Activated T-helper 1 cell treated with anti-CD3 and anti-CD28 coated beads, Interleukin-12 subunit alpha, Interleukin-12 subunit beta, Interleukin-2, Interleukin-4 antibody, amounts not matched to agents 30 ng/mL and 10 ng/mL and 1 ng/mL, durations not matched to agents 14 hours and 24 hours and 36 hours (primary cell): ENCODE measurements at regions of chr4 and their contacts with region 1.

Region 1: GRCh38 chr4:8440492-8441341 is at the starts of genes ACOX3 and TRMT44:
- DNase-seq: peak; percentile 96
- H3K4me3 Mint-ChIP-seq: peak within 1 kb of the TSS; percentile 93
- H3K27ac Mint-ChIP-seq: peak within 1 kb of the TSS; percentile 95
- H3K4me1 Mint-ChIP-seq: peaks cover 73% of the 10 kb centered on the region
- H3K27me3 Mint-ChIP-seq: no peaks in the 10 kb centered on the region
- total RNA-seq, gene ACOX3: 18.4 and 20.7 TPM in 2 replicates
- total RNA-seq, gene TRMT44: 36.8 and 39.2 TPM in 2 replicates

Region 2: GRCh38 chr4:6574747-6575502 is 1865.8 kb before region 1 on chr4 and contains the start of gene MAN2B2:
- intact Hi-C with region 1: loop called (anchors 10 kb)
- DNase-seq: peak; percentile 83
- H3K4me3 Mint-ChIP-seq: peak within 1 kb of the TSS; percentile 87
- H3K27ac Mint-ChIP-seq: peak within 1 kb of the TSS; percentile 71
- H3K4me1 Mint-ChIP-seq: no peaks in the 10 kb centered on the region
- H3K27me3 Mint-ChIP-seq: peaks cover 5% of the 10 kb centered on the region
- total RNA-seq, gene MAN2B2: 13.9 and 14.0 TPM in 2 replicates

Region 3: GRCh38 chr4:8158710-8159536 is 281.8 kb before region 1 on chr4 and contains the start of gene ABLIM2:
- intact Hi-C with region 1: loop called (anchors 1 kb)
- DNase-seq: peak; percentile 99
- H3K4me3 Mint-ChIP-seq: peak within 1 kb of the TSS; percentile 98
- H3K27ac Mint-ChIP-seq: peak within 1 kb of the TSS; percentile 42
- H3K4me1 Mint-ChIP-seq: peaks cover 5% of the 10 kb centered on the region
- H3K27me3 Mint-ChIP-seq: peaks cover 22% of the 10 kb centered on the region
- total RNA-seq, gene ABLIM2: 0.24 and 0.36 TPM in 2 replicates

Region 4: GRCh38 chr4:8228319-8229250 is 212.1 kb before region 1 on chr4:
- intact Hi-C with region 1: loop called (anchors 1 kb)
- DNase-seq: peak; percentile 56
- H3K4me3 Mint-ChIP-seq: no peak overlapping the region
- H3K27ac Mint-ChIP-seq: peak overlapping the region; percentile 65
- H3K4me1 Mint-ChIP-seq: peaks cover 14% of the 10 kb centered on the region
- H3K27me3 Mint-ChIP-seq: no peaks in the 10 kb centered on the region

Region 5: DNA sequence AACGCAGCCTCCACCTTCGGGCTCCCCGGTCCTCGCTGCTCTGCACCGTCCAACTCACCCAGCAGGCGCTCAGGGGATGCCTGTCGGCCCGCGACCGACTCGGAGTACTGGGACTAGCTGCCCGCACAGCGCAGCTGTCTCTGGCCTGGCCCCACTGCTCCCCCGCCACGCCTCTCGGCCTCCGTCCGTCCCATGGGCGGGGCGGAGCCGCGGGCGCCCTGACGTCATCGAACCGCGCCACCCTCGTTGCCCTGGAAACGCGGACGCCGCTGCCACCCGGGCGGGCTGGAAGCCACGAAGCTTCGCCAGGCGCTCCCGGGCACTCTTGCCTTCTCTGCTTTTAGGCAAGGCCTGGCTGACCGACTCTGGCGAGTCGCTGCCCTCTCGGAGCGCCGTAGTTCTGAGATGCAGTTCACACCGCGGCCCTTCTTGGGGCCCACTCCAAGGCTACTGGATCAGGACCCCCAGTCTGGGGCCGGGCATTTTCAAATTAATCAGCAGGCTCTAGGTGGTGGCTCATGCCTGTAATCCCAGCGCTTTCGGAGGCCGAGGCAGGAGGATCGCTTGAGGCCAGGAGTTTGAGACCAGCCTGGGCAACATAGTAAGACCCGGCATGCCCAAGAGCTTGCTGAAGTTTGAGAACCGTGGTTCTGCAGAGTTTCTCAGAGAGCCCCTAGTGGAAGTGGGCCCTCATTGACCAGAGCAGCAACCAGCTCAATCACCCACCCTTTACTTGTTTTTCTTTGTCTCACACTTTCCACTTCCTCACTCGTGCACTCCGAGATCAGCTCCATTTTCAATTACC is 12.2 kb before region 1 on chr4:
- intact Hi-C with region 1: loop called (anchors 1 kb)
- DNase-seq: peak; percentile 92
- H3K4me3 Mint-ChIP-seq: peak overlapping the region; percentile 92
- H3K27ac Mint-ChIP-seq: peak overlapping the region; percentile 86
- H3K4me1 Mint-ChIP-seq: peaks cover 20% of the 10 kb centered on the region
- H3K27me3 Mint-ChIP-seq: no peaks in the 10 kb centered on the region